GM10248 (cell line): ENCODE measurements at regions of chr14 and their contacts with region 1.

Region 1: GRCh38 chr14:52961060-52961639 is 10.3 kb upstream of the FERMT2 start:
- DNase-seq: peak; percentile 63
- CTCF ChIP-seq: peak; percentile 61

Region 2: GRCh38 chr14:52299692-52300278 is 661.4 kb before region 1 on chr14:
- CTCF ChIA-PET with region 1: interaction called, 11 read pairs
- POLR2A ChIA-PET with region 1: no interaction called
- DNase-seq: peak; percentile 57
- CTCF ChIP-seq: peak; percentile 66

Region 3: GRCh38 chr14:52824507-52824906 is 136.6 kb before region 1 on chr14:
- CTCF ChIA-PET with region 1: interaction called, 51 read pairs
- POLR2A ChIA-PET with region 1: no interaction called
- DNase-seq: no peak
- CTCF ChIP-seq: no peak

Region 4: DNA sequence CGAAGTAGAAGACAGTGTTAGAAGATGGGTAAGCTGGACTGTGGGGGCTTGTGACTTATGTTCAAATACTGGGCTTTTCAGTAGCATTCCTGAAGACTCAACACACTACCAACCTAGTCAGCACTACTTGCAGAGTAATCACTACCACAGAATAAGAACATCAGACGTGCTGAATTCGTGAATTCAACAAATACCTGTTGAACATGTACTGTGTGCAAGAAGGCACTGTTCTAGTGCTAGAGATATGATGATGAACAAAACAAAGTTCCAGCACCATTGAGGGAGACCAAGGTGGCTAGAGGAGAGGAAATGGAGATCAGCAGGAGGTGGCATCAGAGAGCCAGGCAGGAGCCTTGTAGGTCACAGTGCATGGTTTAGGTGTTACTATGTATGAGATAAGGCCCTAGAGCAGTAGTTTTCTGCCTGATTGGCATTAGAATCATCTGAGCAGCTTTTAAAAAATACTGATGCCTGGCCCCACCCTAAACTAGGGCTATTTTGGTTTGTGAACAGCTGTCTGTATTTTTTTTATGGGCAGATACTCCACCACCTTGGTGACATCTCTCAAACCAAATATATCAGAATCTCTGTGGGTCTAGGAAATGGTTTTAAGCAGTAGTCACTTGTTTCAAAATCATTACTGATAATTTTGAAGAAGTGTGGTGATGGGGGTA is 37.1 kb before region 1 on chr14:
- CTCF ChIA-PET with region 1: interaction called, 10 read pairs
- POLR2A ChIA-PET with region 1: no interaction called
- DNase-seq: no peak
- CTCF ChIP-seq: peak; percentile 44

Region 5: GRCh38 chr14:52950898-52951689 is 10.1 kb before region 1 on chr14 and contains the start of gene FERMT2:
- CTCF ChIA-PET with region 1: interaction called, 22 read pairs
- POLR2A ChIA-PET with region 1: no interaction called
- DNase-seq: peak; percentile 72
- CTCF ChIP-seq: no peak